Mammary epithelial cell (primary cell): ENCODE measurements at regions of chr9 and their contacts with region 1.

Region 1: DNA sequence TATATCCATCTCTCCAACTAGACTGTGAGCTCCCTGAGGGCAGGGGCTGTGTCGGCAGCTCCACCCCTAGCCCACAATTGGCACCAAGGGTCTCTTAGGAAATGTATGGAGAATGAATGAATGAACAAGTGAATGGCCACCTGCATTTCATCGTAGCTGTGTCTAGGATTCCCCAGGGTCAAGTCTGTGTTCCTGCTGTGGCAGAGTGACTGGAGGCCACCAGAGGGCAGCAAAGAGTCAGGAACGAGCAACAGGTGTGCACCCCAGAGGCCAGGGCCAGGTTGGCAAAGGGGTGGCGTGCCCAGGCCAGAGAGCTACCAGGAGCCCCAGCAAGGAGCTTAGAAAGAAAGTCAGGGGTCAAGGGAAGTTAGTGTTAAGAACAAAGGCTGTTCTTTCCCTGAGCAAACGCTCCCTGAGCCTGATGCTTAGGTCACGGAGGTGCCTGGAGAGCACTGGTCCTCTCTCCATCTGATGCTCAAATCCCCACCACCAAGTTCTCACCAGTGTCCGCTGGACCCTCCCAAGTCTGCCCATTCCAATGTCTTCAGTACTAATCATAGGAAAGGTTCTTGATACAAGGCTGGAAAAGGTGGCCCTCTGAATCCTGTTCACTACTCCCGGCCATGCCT is 160.7 kb downstream of the PAX5 start:
- DNase-seq: peak; percentile 40
- H3K4me3 ChIP-seq: no peak overlapping the region
- H3K27ac ChIP-seq: no peak overlapping the region
- H3K4me1 ChIP-seq: no peaks in the 10 kb centered on the region
- H3K27me3 ChIP-seq: peaks cover 2% of the 10 kb centered on the region
- CTCF ChIP-seq: peak; percentile 94 to 96

Region 2: DNA sequence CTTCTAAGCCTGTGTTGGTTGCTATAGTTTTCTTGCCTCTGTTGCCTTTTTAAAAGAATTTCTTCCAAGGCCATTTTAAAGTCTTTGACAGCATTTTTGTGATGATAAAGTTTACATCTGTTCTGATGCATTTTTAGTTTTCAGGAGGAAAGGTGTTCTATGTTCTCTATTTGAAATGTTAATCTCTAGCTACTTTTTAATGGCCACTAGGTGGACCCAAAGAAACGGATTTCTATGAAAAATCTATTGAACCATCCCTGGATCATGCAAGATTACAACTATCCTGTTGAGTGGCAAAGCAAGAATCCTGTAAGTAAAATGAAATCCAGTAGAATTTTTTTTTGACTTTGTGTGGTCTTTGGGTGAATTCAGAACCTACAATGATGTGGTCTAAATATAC is 240.5 kb before region 1 on chr9:
- CTCF ChIA-PET with region 1: no interaction called
- dilution Hi-C with region 1: no loop called
- in situ Hi-C with region 1: no loop called
- intact Hi-C with region 1: loop called (anchors 5 kb)
- DNase-seq: peak; percentile 12
- H3K4me3 ChIP-seq: no peak overlapping the region
- H3K27ac ChIP-seq: no peak overlapping the region
- H3K4me1 ChIP-seq: no peaks in the 10 kb centered on the region
- H3K27me3 ChIP-seq: no peaks in the 10 kb centered on the region
- CTCF ChIP-seq: peak; percentile 53 to 58

Region 3: DNA sequence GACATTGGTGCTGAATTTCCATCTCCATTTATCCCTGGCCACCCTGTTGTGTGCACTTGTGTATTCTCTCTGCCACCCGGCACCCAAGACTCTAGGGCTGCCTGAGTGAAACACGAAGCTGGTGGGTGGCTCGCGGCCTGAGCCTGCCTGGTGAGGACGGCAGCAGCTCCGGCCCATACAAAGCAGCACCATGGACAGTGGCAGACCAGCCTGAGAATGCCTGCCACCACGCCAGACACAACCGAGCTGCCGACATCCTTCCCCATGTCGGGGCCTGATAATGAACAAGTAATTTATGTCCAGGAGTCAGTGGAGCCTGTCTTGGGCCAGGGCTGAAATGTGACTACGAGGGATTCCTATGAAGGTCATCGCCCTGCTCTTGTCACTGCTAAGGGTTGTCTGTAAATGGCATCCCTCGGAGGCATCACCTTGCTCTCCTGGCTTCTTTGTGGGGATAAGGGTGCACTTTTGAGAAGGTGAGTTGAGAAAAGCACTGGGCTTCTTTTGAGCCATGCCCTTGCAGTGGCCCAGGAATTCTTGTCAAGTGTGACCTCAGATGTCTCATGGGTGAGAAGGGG is 125.0 kb before region 1 on chr9:
- CTCF ChIA-PET with region 1: no interaction called
- dilution Hi-C with region 1: no loop called
- in situ Hi-C with region 1: no loop called
- intact Hi-C with region 1: no loop called
- DNase-seq: peak; percentile 38
- H3K4me3 ChIP-seq: no peak overlapping the region
- H3K27ac ChIP-seq: no peak overlapping the region
- H3K4me1 ChIP-seq: no peaks in the 10 kb centered on the region
- H3K27me3 ChIP-seq: peaks cover 3% of the 10 kb centered on the region
- CTCF ChIP-seq: no peak

Region 4: GRCh38 chr9:36818965-36819870 is 54.1 kb before region 1 on chr9:
- CTCF ChIA-PET with region 1: no interaction called
- dilution Hi-C with region 1: no loop called
- in situ Hi-C with region 1: no loop called
- intact Hi-C with region 1: no loop called
- DNase-seq: no peak
- H3K4me3 ChIP-seq: no peak overlapping the region
- H3K27ac ChIP-seq: no peak overlapping the region
- H3K4me1 ChIP-seq: peaks cover 3% of the 10 kb centered on the region
- H3K27me3 ChIP-seq: peaks cover 4% of the 10 kb centered on the region
- CTCF ChIP-seq: no peak

Region 5: DNA sequence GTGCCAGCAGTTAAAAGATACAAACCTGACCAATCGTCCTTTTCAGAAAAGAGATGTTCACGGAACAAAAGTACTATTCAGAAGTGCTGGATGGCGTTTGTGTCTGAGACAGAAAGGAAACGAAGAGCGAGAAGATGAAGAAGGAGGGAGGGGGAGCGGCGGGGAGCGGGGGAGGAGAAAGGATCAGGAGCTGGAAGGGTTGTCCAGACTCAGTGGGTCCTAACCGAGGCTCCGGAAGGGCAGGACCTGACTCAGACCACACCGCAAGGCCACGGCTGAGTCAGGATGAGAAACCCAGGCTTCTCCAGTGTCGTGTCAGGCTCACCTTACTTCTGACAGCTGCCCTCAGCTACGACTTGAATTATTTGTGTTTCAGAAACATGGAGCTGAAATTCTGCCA is 114.5 kb after region 1 on chr9:
- CTCF ChIA-PET with region 1: interaction called, 6 read pairs
- dilution Hi-C with region 1: no loop called
- in situ Hi-C with region 1: loop called (anchors 5 kb)
- intact Hi-C with region 1: loop called (anchors 1 kb)
- DNase-seq: peak; percentile 30
- H3K4me3 ChIP-seq: no peak overlapping the region
- H3K27ac ChIP-seq: no peak overlapping the region
- H3K4me1 ChIP-seq: peaks cover 5% of the 10 kb centered on the region
- H3K27me3 ChIP-seq: peaks cover 23% of the 10 kb centered on the region
- CTCF ChIP-seq: no peak

Region 6: DNA sequence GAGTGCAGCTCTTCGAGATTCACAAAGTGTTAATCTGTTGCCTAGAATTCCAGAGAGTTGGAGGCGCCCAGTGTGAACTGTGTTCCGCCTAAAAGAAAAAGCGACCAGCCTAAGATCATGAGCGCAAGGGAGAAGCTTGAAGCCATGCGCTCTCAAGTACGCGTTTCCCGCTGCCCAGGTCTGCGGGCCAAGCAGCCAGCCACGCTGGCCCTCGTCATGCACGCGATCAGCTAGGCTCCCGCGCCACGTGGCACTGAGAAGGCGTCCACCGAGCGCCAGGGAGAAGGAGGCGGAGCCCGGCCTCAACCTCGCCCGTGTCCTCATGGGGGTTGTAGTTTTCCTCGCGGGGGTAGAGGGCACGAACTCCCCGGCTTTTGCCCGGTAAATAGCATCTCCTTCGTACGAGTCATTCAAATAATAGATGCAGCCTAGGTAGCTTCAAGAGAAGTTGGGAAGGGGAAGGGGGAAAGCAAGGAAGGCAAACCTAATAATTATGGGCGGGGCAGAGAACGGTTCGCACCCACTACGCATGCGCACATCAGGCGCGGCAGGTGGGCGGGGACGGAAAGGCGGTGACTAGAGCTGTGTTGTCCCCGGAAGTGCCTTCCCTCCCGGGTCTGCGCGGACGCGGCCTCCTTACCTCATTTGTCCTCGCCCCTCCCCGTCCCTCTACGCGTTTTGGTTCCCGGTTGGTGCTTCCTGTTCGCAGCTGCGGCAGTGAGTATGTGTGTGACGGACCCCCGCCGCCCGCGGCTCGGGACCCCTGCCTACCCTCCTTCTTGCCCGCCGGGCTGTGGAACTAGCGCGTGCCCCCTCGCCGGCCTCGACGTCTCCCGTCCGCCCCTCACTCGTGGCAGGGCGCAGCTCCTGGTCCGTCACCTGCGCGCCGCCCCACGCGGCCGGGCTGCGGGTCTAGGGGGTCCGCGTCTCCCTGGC is 246.8 kb after region 1 on chr9 and contains the start of gene ZCCHC7:
- CTCF ChIA-PET with region 1: no interaction called
- dilution Hi-C with region 1: no loop called
- in situ Hi-C with region 1: no loop called
- intact Hi-C with region 1: loop called (anchors 10 kb)
- DNase-seq: peak; percentile 92
- H3K4me3 ChIP-seq: peak within 1 kb of the TSS; percentile 69 to 99 (median 93)
- H3K27ac ChIP-seq: peak within 1 kb of the TSS; percentile 84
- H3K4me1 ChIP-seq: peaks cover 9% of the 10 kb centered on the region
- H3K27me3 ChIP-seq: no peaks in the 10 kb centered on the region
- CTCF ChIP-seq: no peak
- total RNA-seq, gene ZCCHC7: 15.8 to 25.5 TPM

Region 7: DNA sequence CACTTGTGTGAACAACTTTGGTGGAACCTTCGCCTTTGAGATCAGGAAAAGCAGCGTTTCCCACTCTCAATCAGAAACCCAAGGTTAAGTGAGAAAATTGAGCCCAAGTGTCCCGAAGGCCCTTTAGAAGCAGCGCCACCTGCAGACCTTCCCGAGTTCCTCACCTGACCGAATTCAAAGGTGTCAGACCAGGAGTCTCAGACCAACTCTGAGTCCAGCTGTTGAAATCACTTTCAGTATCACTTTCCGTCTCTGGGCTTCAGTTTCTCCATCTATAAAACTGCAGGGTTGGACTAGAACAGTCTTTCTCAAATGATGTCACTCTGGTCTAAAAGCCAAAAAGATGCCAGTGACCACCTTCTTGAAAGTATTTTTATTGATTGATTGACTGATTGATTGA is 517.4 kb after region 1 on chr9:
- CTCF ChIA-PET with region 1: no interaction called
- dilution Hi-C with region 1: no loop called
- in situ Hi-C with region 1: loop called in 1 of 2 experiments (anchors 25 kb)
- intact Hi-C with region 1: loop called (anchors 1 kb)
- DNase-seq: peak; percentile 29
- H3K4me3 ChIP-seq: no peak overlapping the region
- H3K27ac ChIP-seq: no peak overlapping the region
- H3K4me1 ChIP-seq: no peaks in the 10 kb centered on the region
- H3K27me3 ChIP-seq: no peaks in the 10 kb centered on the region
- CTCF ChIP-seq: peak; percentile 37 to 48